ENCODE measurements at regions of chr19 and their contacts with region 1.

Region 1: GRCh38 chr19:55301459-55302317 is 17.9 kb downstream of the BRSK1 start:
- DNase-seq: peak; percentile 99
- H3K4me3 ChIP-seq: peak overlapping the region in 1 of 2 experiments; percentile 21; a peak in 3 of 4 replicates
- H3K27ac ChIP-seq: peak overlapping the region in 1 of 2 experiments; percentile 41; a peak in 1 of 4 replicates
- H3K4me1 ChIP-seq: peaks cover 0 to 8% of the 10 kb centered on the region in 2 experiments; a peak in 1 of 4 replicates
- H3K27me3 ChIP-seq: no peaks in the 10 kb centered on the region
- CTCF ChIP-seq: peak; percentile 91
- EP300 ChIP-seq: no peak
- RAD21 ChIP-seq: peak; percentile 73

Region 2: GRCh38 chr19:55146078-55146704 is 155.5 kb before region 1 on chr19:
- CTCF ChIA-PET with region 1: interaction called, 23 read pairs
- POLR2A ChIA-PET with region 1: no interaction called
- DNase-seq: peak; percentile 76
- H3K4me3 ChIP-seq: peak overlapping the region in 1 of 2 experiments; percentile 24; a peak in 2 of 4 replicates
- H3K27ac ChIP-seq: no peak overlapping the region
- H3K4me1 ChIP-seq: no peaks in the 10 kb centered on the region; a peak in 1 of 4 replicates
- H3K27me3 ChIP-seq: peaks cover 28% of the 10 kb centered on the region
- CTCF ChIP-seq: peak; percentile 54
- EP300 ChIP-seq: no peak
- RAD21 ChIP-seq: no peak

Region 3: GRCh38 chr19:55241143-55242088 is 60.3 kb before region 1 on chr19:
- CTCF ChIA-PET with region 1: no interaction called
- POLR2A ChIA-PET with region 1: no interaction called
- DNase-seq: no peak
- H3K4me3 ChIP-seq: no peak overlapping the region
- H3K27ac ChIP-seq: no peak overlapping the region
- H3K4me1 ChIP-seq: no peaks in the 10 kb centered on the region
- H3K27me3 ChIP-seq: no peaks in the 10 kb centered on the region
- CTCF ChIP-seq: no peak
- EP300 ChIP-seq: no peak
- RAD21 ChIP-seq: no peak

Region 4: DNA sequence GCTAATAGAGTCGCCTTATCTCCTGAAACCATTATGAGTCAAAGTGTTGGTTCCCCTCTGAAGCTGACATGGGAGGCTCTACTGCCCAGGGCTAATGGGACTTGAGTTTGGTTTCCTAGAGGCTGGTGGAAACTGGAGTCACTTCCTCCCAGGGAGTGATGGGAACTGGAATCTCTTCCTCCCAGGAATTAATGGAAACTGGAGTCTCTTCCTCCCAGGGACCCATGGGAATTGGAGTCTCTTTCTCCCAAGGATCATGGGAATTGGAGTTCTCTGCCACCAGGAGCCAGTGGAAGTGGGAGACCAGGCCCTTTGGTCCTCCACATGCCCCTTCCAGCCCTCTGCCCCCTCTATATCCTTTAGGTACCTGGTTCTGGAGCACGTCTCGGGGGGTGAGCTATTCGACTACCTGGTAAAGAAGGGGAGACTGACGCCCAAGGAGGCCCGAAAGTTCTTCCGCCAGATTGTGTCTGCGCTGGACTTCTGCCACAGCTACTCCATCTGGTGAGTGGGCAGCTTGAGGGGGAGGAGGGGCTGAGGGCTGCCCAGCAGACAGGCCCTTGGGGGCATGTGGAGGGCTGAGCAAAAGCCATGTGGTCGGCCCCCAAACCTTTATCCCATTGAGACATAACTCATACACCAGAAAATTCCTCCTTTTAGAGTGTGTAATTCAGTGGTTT is 12.4 kb before region 1 on chr19:
- CTCF ChIA-PET with region 1: interaction called, 22 read pairs
- POLR2A ChIA-PET with region 1: interaction called, 3 read pairs
- DNase-seq: peak; percentile 33
- H3K4me3 ChIP-seq: no peak overlapping the region
- H3K27ac ChIP-seq: no peak overlapping the region
- H3K4me1 ChIP-seq: peaks cover 0 to 7% of the 10 kb centered on the region in 2 experiments; a peak in 1 of 4 replicates
- H3K27me3 ChIP-seq: no peaks in the 10 kb centered on the region
- CTCF ChIP-seq: no peak
- EP300 ChIP-seq: no peak
- RAD21 ChIP-seq: no peak

Region 5: GRCh38 chr19:55319785-55320184 is 18.1 kb after region 1 on chr19:
- CTCF ChIA-PET with region 1: interaction called, 46 read pairs
- POLR2A ChIA-PET with region 1: interaction called, 8 read pairs
- DNase-seq: peak; percentile 83
- H3K4me3 ChIP-seq: no peak overlapping the region
- H3K27ac ChIP-seq: no peak overlapping the region
- H3K4me1 ChIP-seq: no peaks in the 10 kb centered on the region
- H3K27me3 ChIP-seq: no peaks in the 10 kb centered on the region
- CTCF ChIP-seq: no peak
- EP300 ChIP-seq: no peak
- RAD21 ChIP-seq: no peak

Region 6: GRCh38 chr19:55333870-55334269 is 32.2 kb after region 1 on chr19:
- CTCF ChIA-PET with region 1: interaction called, 14 read pairs
- POLR2A ChIA-PET with region 1: no interaction called
- DNase-seq: no peak
- H3K4me3 ChIP-seq: no peak overlapping the region
- H3K27ac ChIP-seq: no peak overlapping the region
- H3K4me1 ChIP-seq: peaks cover 0 to 6% of the 10 kb centered on the region in 2 experiments; a peak in 2 of 4 replicates
- H3K27me3 ChIP-seq: no peaks in the 10 kb centered on the region; the same call in 1 of the 2 replicates
- CTCF ChIP-seq: no peak
- EP300 ChIP-seq: no peak
- RAD21 ChIP-seq: no peak

Region 7: DNA sequence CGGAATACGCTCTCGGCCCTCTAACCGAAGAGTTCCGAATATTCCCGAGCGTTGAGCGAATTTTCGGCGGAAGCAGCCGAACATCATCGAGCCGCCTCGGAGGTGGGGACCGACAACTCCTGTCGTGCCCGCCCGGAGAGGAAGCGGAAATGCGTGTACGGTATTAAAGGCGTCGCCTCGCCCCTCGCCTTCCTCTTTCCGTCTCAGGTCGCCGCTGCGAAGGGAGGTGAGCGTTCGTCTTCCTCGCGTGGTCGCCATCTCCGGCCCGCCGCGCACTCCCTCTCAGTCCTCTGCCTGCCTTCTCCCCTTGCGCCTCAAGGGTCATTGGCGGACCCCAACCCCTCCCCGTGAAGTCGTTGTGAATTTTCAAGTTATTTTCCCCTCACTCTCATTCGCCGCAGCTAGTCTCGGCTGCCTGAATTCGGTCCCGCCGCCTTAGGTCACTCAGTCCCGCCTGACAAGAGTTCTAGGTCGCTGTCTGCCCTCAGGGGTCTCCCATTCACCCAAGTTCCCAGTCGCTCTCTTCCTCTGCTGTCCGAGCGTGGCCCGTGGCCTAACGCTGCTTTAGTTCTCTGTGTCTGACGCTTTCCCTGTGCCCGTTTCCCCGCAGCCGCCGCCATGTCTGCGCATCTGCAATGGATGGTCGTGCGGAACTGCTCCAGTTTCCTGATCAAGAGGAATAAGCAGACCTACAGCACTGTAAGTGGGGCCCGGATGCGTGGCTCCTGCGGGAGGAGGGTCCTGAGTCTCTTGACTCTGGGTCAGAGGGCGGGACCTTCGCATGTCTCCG is 84.2 kb after region 1 on chr19 and contains the start of gene RPL28:
- CTCF ChIA-PET with region 1: interaction called, 33 read pairs
- POLR2A ChIA-PET with region 1: no interaction called
- DNase-seq: peak; percentile 94
- H3K4me3 ChIP-seq: peak within 1 kb of the TSS; percentile 86 to 97
- H3K27ac ChIP-seq: peak within 1 kb of the TSS; percentile 98
- H3K4me1 ChIP-seq: peaks cover 25 to 51% of the 10 kb centered on the region in 2 experiments; a peak in 3 of 4 replicates
- H3K27me3 ChIP-seq: no peaks in the 10 kb centered on the region
- CTCF ChIP-seq: no peak
- EP300 ChIP-seq: no peak
- RAD21 ChIP-seq: no peak
- polyA plus RNA-seq, gene RPL28: 2,297 and 2,368 TPM in 2 replicates

Region 8: GRCh38 chr19:55503502-55504251 is 202.0 kb after region 1 on chr19:
- CTCF ChIA-PET with region 1: interaction called, 12 read pairs
- POLR2A ChIA-PET with region 1: no interaction called
- DNase-seq: peak; percentile 99
- H3K4me3 ChIP-seq: peak overlapping the region; percentile 49 to 62
- H3K27ac ChIP-seq: peak overlapping the region in 1 of 2 experiments; percentile 71; a peak in 1 of 4 replicates
- H3K4me1 ChIP-seq: peaks cover 0 to 6% of the 10 kb centered on the region in 2 experiments; a peak in 1 of 4 replicates
- H3K27me3 ChIP-seq: no peaks in the 10 kb centered on the region
- CTCF ChIP-seq: peak; percentile 96
- EP300 ChIP-seq: no peak
- RAD21 ChIP-seq: peak; percentile 93